ENCODE measurements at regions of chr19 and their contacts with region 1.

Region 1: GRCh38 chr19:36849701-36850558 is 746 bp upstream of the ZNF345 start:
- DNase-seq: peak; percentile 94
- ATAC-seq: peak; percentile 98 to 99

Region 2: DNA sequence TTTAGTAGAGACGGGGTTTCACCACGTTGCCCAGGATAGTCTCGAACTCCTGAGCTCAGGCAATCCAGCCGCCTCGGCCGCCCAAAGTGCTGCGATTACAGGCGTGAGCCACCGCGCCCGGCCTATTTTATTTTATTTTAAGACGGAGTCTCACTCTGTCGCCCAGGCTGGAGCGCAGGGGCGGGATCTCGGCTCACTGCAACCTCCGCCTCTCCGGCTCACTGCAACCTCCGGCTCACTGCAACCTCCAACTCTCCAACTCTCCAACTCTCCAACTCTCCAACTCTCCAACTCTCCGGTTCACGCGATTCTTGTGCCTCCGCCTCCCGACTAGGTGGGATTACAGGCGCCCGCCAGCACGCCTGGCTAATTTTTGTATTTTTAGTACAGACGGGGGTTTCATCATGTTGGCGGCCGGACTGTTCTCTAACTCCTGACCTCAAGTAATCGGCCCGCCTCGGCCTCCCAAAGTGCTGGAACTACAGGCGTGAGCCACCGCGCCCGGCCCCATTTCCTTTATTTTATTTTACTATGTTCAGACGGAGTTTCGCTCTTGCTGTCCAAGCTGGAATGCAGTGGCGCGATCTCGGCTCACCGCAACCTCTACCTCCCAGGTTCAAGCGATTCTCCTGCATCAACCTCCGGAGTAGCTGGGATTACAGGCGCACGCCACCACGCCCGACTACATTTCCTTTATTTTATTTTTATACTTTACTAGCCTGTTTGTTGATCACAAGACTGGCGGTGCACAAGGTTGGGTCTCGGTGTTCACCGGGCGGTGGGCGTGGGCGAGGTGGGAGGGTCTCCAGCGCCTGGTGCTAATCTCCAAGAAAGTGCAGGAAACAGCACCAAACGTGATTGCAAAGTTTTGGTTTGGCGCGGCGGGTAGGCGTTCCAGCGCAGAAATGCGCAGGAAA is 53.6 kb before region 1 on chr19:
- intact Hi-C with region 1: loop called in 1 of 2 experiments (anchors 10 kb)
- DNase-seq: peak; percentile 18
- ATAC-seq: no peak

Region 3: GRCh38 chr19:37654629-37655300 is 804.8 kb after region 1 on chr19:
- intact Hi-C with region 1: no loop called
- DNase-seq: peak; percentile 52
- ATAC-seq: peak; percentile 52 to 74